Right ventricle myocardium superior (tissue), 1 donor: ENCODE measurements at regions of chr15 and their contacts with region 1.

Region 1: DNA sequence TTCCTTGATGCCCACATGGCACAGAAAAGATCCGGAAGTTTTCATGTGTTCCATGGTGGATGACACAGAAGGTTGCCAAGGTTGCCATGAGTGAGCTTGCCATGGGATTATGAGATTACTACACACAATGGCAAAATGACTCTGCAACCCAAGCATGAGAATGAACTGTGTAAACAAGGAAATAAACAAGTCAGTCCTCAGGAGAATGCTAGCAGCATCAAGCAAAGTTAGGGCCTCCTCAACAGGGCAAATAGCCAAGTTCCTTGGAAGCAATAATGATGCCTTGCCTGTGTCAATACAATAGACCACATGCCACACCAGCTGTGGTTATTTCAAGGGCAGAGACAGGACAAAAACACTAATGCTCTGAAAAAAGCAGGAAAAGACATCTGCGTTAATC is 41.8 kb downstream of the AQR start:
- DNase-seq: no peak
- ATAC-seq: no peak

Region 2: DNA sequence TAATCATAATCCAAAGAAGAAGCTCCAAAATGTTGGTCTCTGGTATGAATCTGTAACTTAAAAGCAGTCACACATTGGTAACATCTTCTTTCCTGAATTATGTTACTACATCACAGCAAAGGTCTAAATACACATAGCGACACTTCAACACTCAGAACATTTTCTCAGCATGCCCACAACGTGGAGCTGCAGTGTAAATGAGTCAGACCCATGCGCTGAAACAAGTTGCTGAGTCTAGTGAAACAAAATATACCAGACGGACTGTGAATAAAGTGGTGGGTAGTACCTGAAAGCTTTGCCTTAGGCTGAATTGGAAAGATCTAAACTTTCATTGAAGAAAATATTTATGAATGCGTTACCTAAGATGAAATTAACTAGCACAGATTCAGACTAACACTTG is 311.1 kb before region 1 on chr15:
- intact Hi-C with region 1: loop called (anchors 5 kb)
- DNase-seq: no peak
- ATAC-seq: peak; percentile 88